Transverse colon (tissue), 4 donors: ENCODE measurements at regions of chr10 and their contacts with region 1.

Region 1: DNA sequence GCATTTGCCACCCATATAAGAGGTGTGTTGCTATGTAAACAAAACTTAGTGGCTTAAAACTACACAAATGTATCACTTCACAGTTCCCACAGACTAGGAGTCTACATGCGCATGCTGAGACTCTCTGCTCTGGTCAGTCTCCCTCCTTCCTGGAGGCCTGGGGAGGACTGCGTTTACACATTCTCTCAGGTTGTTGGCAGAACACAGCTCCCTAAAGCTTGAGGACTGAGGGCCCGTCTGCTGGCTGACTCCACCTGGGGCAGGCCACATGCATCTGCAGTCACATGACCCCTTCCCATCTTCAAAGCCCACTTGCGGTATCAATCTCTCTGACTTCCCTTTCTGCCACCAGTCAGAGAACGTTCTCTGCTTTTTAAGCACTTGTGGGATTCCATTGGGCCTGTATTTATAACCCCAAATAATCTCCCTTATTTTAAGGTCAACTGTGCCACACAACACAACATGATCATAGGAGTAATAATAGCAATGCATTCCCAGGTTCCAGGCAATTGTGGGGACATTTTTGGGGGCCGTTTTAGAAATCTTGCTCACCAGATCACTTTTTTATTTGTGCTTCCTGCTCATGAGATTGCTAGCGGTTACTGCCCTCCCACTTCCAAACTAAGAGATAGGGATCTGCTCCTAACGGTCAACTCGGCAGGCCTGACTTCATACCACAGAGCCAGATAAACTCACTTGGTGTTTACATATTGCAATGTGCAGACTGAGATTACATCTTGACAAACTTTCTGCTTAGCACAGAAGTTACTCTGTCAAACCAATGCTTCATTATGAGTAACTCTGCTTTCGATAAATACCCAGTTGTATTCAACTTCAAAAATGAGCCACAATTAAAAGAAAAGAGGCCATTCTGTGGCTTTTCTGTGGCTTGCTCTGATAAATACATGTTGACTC is 96.3 kb downstream of the ALOX5 start:
- DNase-seq: peak; percentile 34
- H3K4me3 ChIP-seq: no peak overlapping the region
- H3K27ac ChIP-seq: peak overlapping the region in 3 of 4 donors; percentile 3 to 34 (median 3)
- H3K4me1 ChIP-seq: peaks cover 0 to 28% (median 12%) of the 10 kb centered on the region in 4 donors
- H3K27me3 ChIP-seq: no peaks in the 10 kb centered on the region
- CTCF ChIP-seq: no peak
- EP300 ChIP-seq: no peak
- POLR2A ChIP-seq: no peak

Region 2: GRCh38 chr10:45660876-45661411 is 190.6 kb after region 1 on chr10:
- in situ Hi-C with region 1: loop called in 3 of 4 experiments (anchors 10 to 25 kb)
- intact Hi-C with region 1: no loop called
- DNase-seq: no peak
- H3K4me3 ChIP-seq: no peak overlapping the region
- H3K27ac ChIP-seq: no peak overlapping the region
- H3K4me1 ChIP-seq: no peaks in the 10 kb centered on the region
- H3K27me3 ChIP-seq: no peaks in the 10 kb centered on the region
- CTCF ChIP-seq: no peak
- EP300 ChIP-seq: no peak
- POLR2A ChIP-seq: no peak